ENCODE measurements at regions of chr5 and their contacts with region 1.

Region 1: GRCh38 chr5:143657647-143658285 is 154.2 kb upstream of the HMHB1 start:
- DNase-seq: peak; percentile 34 to 89
- H3K4me3 ChIP-seq: no peak overlapping the region
- H3K27ac ChIP-seq: no peak overlapping the region
- H3K4me1 ChIP-seq: peaks cover 63% of the 10 kb centered on the region
- H3K27me3 ChIP-seq: no peaks in the 10 kb centered on the region
- CTCF ChIP-seq: no peak

Region 2: DNA sequence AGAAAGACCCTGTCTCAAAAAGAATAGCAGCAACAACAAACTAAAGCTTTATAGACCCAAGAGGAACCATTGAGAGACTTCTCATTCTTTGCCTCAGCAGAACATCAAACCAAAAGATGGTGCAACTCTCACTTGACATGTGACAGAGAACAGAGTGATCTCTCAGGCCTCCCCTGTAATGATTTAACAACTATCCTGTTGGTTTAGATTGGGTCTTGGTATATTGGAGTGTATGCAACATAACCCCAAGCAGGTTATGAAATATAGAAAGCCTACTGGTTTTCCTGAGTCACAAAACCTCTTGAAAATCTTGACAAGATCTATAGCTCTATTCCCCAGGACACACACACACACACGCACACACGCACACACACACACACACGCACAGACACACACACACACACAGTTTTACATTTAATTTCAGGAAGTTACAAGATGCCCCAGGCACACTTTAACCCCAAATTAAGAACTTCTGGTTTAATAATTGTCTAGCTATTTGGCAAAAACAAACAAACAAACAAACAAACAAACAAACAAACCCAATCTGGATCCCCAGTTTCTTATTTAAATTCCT is 965.4 kb before region 1 on chr5:
- CTCF ChIA-PET with region 1: no interaction called
- POLR2A ChIA-PET with region 1: interaction called, 11 read pairs
- intact Hi-C with region 1: no loop called
- DNase-seq: no peak
- H3K4me3 ChIP-seq: no peak overlapping the region
- H3K27ac ChIP-seq: no peak overlapping the region
- H3K4me1 ChIP-seq: no peaks in the 10 kb centered on the region
- H3K27me3 ChIP-seq: no peaks in the 10 kb centered on the region
- CTCF ChIP-seq: no peak

Region 3: GRCh38 chr5:143576711-143577484 is 80.9 kb before region 1 on chr5:
- CTCF ChIA-PET with region 1: no interaction called
- POLR2A ChIA-PET with region 1: no interaction called
- intact Hi-C with region 1: no loop called
- DNase-seq: peak in 1 of 2 experiments; percentile 12
- H3K4me3 ChIP-seq: no peak overlapping the region
- H3K27ac ChIP-seq: no peak overlapping the region
- H3K4me1 ChIP-seq: no peaks in the 10 kb centered on the region
- H3K27me3 ChIP-seq: no peaks in the 10 kb centered on the region
- CTCF ChIP-seq: no peak

Region 4: DNA sequence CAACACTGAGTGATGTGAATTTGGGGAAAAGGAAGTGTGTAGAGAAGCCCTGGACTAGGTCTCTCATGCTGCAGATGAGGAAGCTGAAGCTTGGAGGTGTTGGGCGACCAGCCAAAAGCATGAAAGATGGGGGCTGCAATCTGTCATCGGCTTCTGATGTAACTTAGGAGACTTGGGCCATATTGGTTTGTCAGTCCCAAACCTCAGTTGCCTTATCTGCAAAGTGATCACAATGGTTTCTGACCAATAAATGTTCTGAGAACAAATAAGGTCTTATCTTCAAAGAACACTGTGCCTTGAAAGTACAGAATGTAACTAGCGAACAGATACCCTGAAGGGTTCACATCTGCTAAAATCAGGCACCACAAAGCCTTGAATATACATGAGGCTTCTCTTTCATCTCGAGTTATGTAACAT is 55.8 kb before region 1 on chr5:
- CTCF ChIA-PET with region 1: no interaction called
- POLR2A ChIA-PET with region 1: no interaction called
- intact Hi-C with region 1: no loop called
- DNase-seq: no peak
- H3K4me3 ChIP-seq: no peak overlapping the region
- H3K27ac ChIP-seq: no peak overlapping the region
- H3K4me1 ChIP-seq: peaks cover 3% of the 10 kb centered on the region
- H3K27me3 ChIP-seq: no peaks in the 10 kb centered on the region
- CTCF ChIP-seq: no peak

Region 5: GRCh38 chr5:143874312-143874711 is 216.5 kb after region 1 on chr5:
- CTCF ChIA-PET with region 1: no interaction called
- POLR2A ChIA-PET with region 1: no interaction called
- intact Hi-C with region 1: no loop called
- DNase-seq: peak in 1 of 2 experiments; percentile 49
- H3K4me3 ChIP-seq: no peak overlapping the region
- H3K27ac ChIP-seq: no peak overlapping the region
- H3K4me1 ChIP-seq: peaks cover 14% of the 10 kb centered on the region; the same call in 1 of the 2 replicates
- H3K27me3 ChIP-seq: no peaks in the 10 kb centered on the region
- CTCF ChIP-seq: no peak

Region 6: DNA sequence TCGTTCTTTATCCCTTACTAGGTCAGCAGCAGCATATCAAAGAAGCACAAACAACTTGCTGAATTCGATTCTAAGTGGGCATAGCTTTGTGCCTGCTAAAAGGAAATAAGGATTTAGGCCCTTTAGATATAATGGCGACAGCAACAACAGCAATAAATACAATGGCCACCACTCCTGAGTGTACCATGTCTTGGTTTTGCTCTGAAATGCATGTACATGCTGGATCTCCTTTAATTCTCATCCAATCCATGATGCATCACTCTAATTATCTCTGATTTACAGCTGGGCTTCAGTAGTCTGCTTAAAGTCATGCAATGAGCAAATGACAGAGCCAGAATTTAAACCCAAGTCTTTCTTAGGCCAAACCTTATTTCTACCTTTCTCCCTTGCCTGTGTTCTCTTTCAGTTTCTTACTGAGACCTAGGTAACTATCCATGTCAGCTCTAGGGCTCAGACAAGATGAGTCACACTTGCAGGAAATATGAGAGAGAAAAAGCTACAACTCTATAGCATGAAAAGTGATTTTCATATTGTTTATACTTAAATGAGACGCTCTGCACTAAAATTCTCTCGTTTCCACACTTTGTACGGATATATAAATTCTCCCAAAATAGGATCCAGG is 266.0 kb after region 1 on chr5:
- CTCF ChIA-PET with region 1: no interaction called
- POLR2A ChIA-PET with region 1: interaction called, 13 read pairs
- intact Hi-C with region 1: no loop called
- DNase-seq: no peak
- H3K4me3 ChIP-seq: no peak overlapping the region
- H3K27ac ChIP-seq: peak overlapping the region; percentile 85; the same call in 1 of the 2 replicates
- H3K4me1 ChIP-seq: peaks cover 47% of the 10 kb centered on the region
- H3K27me3 ChIP-seq: no peaks in the 10 kb centered on the region
- CTCF ChIP-seq: no peak

Region 7: DNA sequence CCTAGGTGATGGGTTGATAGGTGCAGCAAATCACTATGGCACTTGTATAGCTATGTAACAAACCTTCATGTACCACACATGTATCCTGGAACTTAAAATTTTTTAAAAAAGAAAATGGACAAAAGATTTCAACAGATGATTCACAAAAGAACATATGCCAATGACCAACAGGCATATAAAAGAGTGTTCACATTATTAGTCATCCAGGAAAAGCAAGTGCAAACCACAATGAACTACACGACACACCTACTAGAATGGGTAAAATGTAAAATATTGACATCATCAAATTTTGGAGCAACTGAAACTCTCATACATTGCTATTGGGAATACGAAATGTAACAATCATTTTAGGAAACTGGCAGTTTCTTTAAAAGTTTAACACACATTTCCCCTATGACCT is 402.8 kb after region 1 on chr5:
- CTCF ChIA-PET with region 1: no interaction called
- POLR2A ChIA-PET with region 1: no interaction called
- intact Hi-C with region 1: no loop called
- DNase-seq: no peak
- H3K4me3 ChIP-seq: no peak overlapping the region
- H3K27ac ChIP-seq: no peak overlapping the region
- H3K4me1 ChIP-seq: no peaks in the 10 kb centered on the region
- H3K27me3 ChIP-seq: no peaks in the 10 kb centered on the region; the same call in 1 of the 2 replicates
- CTCF ChIP-seq: no peak

Measured in PC-9 (cell line).